ENCODE measurements at regions of chr19 and their contacts with region 1.

Region 1: DNA sequence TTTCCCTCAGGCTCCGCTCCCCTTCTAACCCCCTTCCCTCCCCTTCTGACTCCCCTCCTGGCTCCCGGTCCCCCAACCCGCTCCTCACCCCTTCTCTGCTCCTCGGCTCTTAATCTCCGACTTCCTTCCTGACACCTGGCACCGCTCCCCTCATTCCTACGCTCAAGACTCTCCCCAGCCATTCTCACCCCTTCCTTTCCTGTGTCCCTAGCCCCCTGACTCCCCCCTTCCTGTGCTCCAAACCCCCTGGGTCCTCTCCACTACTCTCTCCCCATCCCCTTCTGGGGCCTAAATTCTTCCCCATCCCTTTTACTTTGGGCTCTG is 658 bp downstream of the CLPP start:
- DNase-seq: peak in 1 of 2 experiments; percentile 47
- H3K4me3 ChIP-seq: peak overlapping the region; percentile 63 to 92 (median 68)
- H3K27ac ChIP-seq: 0 out of 2 replicates have a peak overlapping the region, but pooled peaks have one; percentile 40
- H3K4me1 ChIP-seq: peaks cover 0 to 2% (median 1%) of the 10 kb centered on the region in 4 experiments; a peak in 2 of 7 replicates
- H3K27me3 ChIP-seq: no peaks in the 10 kb centered on the region
- CTCF ChIP-seq: no peak
- EP300 ChIP-seq: no peak
- POLR2A ChIP-seq: no peak
- RAD21 ChIP-seq: no peak

Region 2: GRCh38 chr19:6372594-6373095 is 10.7 kb after region 1 on chr19 and contains the start of gene ALKBH7:
- CTCF ChIA-PET with region 1: no interaction called
- POLR2A ChIA-PET with region 1: interaction called, 17 read pairs
- DNase-seq: peak; percentile 92 to 97
- H3K4me3 ChIP-seq: peak within 1 kb of the TSS; percentile 82 to 100 (median 92)
- H3K27ac ChIP-seq: peak within 1 kb of the TSS; percentile 79
- H3K4me1 ChIP-seq: peaks cover 0 to 11% (median 7%) of the 10 kb centered on the region in 4 experiments; a peak in 5 of 7 replicates
- H3K27me3 ChIP-seq: no peaks in the 10 kb centered on the region
- CTCF ChIP-seq: no peak
- EP300 ChIP-seq: no peak
- POLR2A ChIP-seq: no peak; a peak in 1 of 3 replicates
- RAD21 ChIP-seq: no peak
- total RNA-seq, gene ALKBH7: 66.3 and 75.6 TPM in 2 replicates

Region 3: GRCh38 chr19:6431891-6432290 is 69.9 kb after region 1 on chr19:
- CTCF ChIA-PET with region 1: no interaction called
- POLR2A ChIA-PET with region 1: no interaction called
- DNase-seq: no peak
- H3K4me3 ChIP-seq: no peak overlapping the region
- H3K27ac ChIP-seq: no peak overlapping the region
- H3K4me1 ChIP-seq: no peaks in the 10 kb centered on the region
- H3K27me3 ChIP-seq: peaks cover 0 to 6% (median 0%) of the 10 kb centered on the region in 4 experiments; a peak in 1 of 7 replicates
- CTCF ChIP-seq: no peak
- EP300 ChIP-seq: no peak
- POLR2A ChIP-seq: no peak
- RAD21 ChIP-seq: no peak

Region 4: DNA sequence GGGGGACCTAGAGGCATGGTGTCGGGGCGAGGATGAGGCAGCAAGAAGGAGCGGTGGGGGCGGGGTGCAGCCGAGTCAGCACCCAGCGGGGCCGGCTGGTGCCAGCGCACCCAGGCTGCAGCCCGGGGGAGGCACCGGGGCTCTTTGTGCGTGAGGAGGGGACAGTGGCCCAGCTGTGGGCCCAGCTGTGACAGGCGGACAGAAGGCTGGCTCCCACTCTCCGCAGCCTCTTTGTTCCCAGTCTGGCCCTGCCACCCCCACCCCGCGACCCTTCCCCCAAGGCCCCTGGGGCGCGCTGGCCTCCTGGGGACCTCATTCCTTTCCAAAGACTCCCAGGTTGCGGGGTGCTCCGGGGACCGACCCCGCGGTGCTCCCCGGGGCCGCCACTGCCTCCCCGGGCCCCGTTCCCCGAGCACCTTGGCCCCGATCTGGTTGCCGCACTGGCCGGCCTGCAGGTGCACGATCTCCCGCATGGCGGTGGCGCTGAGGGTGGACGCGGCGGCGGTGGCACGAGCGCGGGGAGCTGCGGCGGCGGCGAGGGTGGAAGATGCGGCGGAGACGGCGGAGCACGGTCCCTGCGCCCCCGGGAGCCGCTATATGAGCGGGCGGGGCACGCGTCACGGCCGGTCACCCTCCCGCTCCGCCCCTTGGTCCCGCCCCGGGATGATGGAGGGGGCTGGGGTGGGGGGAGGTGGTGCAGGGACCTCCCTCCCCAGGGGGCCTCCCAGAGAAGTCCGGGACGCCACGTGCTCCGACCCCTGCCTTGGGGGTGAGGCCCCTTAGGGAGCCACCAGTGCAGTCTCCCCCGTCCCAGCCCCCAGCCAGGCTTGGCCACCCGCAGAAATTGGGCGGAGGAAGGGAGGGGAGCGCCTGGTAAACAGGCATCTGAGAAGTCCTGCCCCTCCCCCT is 140.0 kb after region 1 on chr19 and contains the start of gene TUBB4A:
- CTCF ChIA-PET with region 1: no interaction called
- POLR2A ChIA-PET with region 1: no interaction called
- DNase-seq: peak in 1 of 2 experiments; percentile 75
- H3K4me3 ChIP-seq: peak within 1 kb of the TSS; percentile 44 to 86 (median 59)
- H3K27ac ChIP-seq: no peak within 1 kb of the TSS
- H3K4me1 ChIP-seq: peaks cover 0 to 10% (median 7%) of the 10 kb centered on the region in 4 experiments; a peak in 5 of 7 replicates
- H3K27me3 ChIP-seq: peaks cover 0 to 8% (median 7%) of the 10 kb centered on the region in 4 experiments; a peak in 4 of 7 replicates
- CTCF ChIP-seq: no peak
- EP300 ChIP-seq: no peak
- POLR2A ChIP-seq: no peak
- RAD21 ChIP-seq: no peak
- total RNA-seq, gene TUBB4A: 21.2 and 30.4 TPM in 2 replicates

Region 5: DNA sequence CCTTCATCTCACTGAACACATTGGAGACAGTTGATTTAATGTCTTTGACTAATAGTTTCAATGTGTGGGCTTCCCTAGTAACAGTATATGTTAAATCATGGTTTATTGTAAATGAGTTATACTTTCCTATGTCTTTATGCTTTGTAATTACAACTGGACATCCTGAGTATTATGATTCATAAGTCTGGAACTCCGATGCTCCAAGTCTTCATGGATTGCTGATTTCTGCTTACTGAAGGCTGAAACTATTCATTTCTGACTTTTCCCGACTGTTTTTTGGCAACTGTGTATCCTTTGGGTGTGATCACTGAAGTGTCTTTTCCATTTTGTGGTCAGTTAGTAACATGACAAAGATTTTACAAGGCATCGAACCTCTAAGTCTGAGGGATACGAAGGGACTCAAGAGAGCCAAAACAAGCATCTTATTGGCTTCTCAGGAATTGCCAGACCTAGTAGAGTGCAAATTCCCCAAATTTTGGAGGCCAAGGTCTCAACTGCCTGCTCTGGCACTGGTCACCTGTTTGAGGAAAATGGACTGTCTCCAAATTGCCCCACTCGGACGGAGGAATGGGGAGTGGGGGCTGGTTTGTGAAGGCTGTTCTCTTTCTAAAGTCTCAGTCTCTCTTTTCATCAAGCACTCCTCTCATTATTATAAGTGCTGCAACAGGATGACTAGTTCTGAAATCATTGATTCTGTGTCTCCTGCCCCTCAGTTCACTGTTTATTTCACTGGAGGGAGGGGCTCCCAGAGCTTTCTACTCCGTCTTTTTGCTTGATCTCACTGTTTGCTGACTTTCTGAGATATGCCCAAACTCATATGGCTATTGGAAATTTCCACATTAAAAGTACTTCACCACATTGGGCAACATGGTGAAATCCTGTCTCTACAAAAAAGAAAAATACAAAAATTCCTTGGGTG is 249.2 kb after region 1 on chr19:
- CTCF ChIA-PET with region 1: no interaction called
- POLR2A ChIA-PET with region 1: no interaction called
- DNase-seq: no peak
- H3K4me3 ChIP-seq: no peak overlapping the region
- H3K27ac ChIP-seq: no peak overlapping the region
- H3K4me1 ChIP-seq: no peaks in the 10 kb centered on the region
- H3K27me3 ChIP-seq: no peaks in the 10 kb centered on the region
- CTCF ChIP-seq: no peak
- EP300 ChIP-seq: no peak
- POLR2A ChIP-seq: no peak
- RAD21 ChIP-seq: no peak

Measured in H1 (cell line).